Activated T-helper 1 cell treated with anti-CD3 and anti-CD28 coated beads, Interleukin-12 subunit alpha, Interleukin-12 subunit beta, Interleukin-2, Interleukin-4 antibody, amounts not matched to agents 30 ng/mL and 10 ng/mL and 1 ng/mL, durations not matched to agents 14 hours and 24 hours and 36 hours (primary cell): ENCODE measurements at regions of chr11 and their contacts with region 1.

Region 1: GRCh38 chr11:31397239-31397834 is 27.7 kb downstream of the DNAJC24 start:
- DNase-seq: no peak
- H3K4me3 Mint-ChIP-seq: no peak overlapping the region
- H3K27ac Mint-ChIP-seq: no peak overlapping the region
- H3K4me1 Mint-ChIP-seq: no peaks in the 10 kb centered on the region
- H3K27me3 Mint-ChIP-seq: no peaks in the 10 kb centered on the region

Region 2: DNA sequence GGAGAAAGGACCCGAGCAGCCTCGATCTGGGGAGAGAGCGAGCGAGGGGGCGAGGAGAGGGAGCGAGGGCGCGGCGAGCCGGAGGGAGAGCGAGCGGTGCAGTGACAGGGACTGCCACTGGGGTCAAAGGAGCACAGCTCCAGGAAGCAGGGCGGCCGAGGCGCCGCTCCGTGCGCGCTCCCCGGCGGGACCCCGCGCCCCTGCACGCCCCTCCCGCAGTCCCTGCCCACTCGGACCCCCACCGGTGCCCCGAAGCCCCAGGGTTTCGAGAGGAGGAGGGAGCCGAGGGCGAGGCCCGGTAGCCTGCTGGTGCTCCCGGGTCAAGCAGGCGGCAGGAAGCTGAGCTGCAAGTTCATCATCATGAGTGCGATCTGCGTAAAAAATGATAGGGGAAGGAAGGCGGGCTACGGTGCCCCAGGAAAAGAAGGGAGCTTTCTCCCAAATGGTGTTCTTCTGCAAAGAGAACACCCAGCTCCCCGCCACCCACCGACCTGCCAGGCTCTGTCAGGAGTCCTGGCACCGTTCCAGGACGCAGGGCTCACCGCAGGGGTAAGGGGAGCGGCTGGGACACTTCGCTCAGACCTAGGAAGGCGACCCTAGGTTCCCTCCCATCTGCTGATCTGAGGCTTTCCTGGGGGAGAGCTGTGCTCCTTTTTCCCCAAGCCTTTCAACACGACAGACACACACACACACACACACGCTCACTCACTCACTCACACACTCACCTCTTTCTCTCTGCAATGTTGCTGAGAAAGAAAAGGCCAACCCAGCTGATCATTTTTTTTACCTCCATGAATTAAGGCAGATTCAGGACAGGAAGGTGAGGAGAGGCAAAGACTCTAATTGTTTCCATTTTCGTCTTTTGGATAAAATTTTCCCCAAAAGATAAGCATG is 810.8 kb before region 1 on chr11 and contains the start of gene MPPED2:
- intact Hi-C with region 1: no loop called
- DNase-seq: no peak
- H3K4me3 Mint-ChIP-seq: peak within 1 kb of the TSS; percentile 71
- H3K27ac Mint-ChIP-seq: no peak within 1 kb of the TSS
- H3K4me1 Mint-ChIP-seq: no peaks in the 10 kb centered on the region
- H3K27me3 Mint-ChIP-seq: peaks cover 57% of the 10 kb centered on the region
- total RNA-seq, gene MPPED2: not detected in 2 replicates

Region 3: GRCh38 chr11:31804312-31805036 is 407.1 kb after region 1 on chr11:
- intact Hi-C with region 1: loop called (anchors 5 kb)
- DNase-seq: no peak
- H3K4me3 Mint-ChIP-seq: peak overlapping the region; percentile 37
- H3K27ac Mint-ChIP-seq: peak overlapping the region; percentile 81
- H3K4me1 Mint-ChIP-seq: peaks cover 28% of the 10 kb centered on the region
- H3K27me3 Mint-ChIP-seq: peaks cover 90% of the 10 kb centered on the region

Region 4: GRCh38 chr11:31870609-31871309 is 473.4 kb after region 1 on chr11:
- intact Hi-C with region 1: loop called (anchors 1 kb)
- DNase-seq: no peak
- H3K4me3 Mint-ChIP-seq: no peak overlapping the region
- H3K27ac Mint-ChIP-seq: no peak overlapping the region
- H3K4me1 Mint-ChIP-seq: no peaks in the 10 kb centered on the region
- H3K27me3 Mint-ChIP-seq: peaks cover 15% of the 10 kb centered on the region

Region 5: GRCh38 chr11:32006799-32007388 is 609.6 kb after region 1 on chr11:
- intact Hi-C with region 1: loop called (anchors 1 kb)
- DNase-seq: no peak
- H3K4me3 Mint-ChIP-seq: no peak overlapping the region
- H3K27ac Mint-ChIP-seq: no peak overlapping the region
- H3K4me1 Mint-ChIP-seq: no peaks in the 10 kb centered on the region
- H3K27me3 Mint-ChIP-seq: peaks cover 17% of the 10 kb centered on the region